Mammary epithelial cell (primary cell): ENCODE measurements at regions of chr11 and their contacts with region 1.

Region 1: DNA sequence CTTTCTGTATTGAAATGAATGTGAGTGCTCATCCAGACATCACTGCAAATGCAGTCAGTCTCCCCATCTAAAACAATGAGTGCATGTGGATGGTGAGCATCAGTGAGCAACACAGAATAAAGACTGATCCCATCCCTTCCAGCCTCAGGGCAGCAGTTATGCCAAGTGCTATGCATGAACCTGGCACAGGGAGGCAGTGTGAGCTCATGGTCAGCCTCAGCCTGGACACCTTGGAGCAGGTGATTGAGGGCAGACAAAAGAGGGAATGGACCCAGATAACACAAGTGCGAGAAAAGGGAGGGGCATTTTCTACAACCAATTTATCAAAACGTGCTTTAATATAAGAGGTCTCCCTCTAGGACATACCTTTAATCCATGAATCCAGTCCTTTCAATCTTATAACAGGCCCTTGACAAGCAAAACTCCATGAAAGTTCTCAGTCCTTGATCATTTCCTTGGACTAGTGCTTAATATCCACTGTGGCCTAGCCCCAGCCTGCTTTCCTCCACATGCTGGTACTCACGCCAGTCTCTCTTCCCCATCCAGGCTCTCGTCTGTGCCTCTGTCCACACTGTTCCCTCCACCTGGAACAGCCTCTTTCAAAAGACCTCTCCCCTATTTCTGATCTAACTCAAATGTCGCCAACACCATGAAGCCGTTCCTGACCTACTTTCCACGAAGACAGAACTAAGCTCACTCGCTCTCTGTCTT is 50.5 kb upstream of the LRRC55 start:
- DNase-seq: peak; percentile 39
- H3K4me3 ChIP-seq: no peak overlapping the region
- H3K27ac ChIP-seq: no peak overlapping the region
- H3K4me1 ChIP-seq: no peaks in the 10 kb centered on the region
- H3K27me3 ChIP-seq: no peaks in the 10 kb centered on the region
- CTCF ChIP-seq: peak; percentile 78 to 93

Region 2: DNA sequence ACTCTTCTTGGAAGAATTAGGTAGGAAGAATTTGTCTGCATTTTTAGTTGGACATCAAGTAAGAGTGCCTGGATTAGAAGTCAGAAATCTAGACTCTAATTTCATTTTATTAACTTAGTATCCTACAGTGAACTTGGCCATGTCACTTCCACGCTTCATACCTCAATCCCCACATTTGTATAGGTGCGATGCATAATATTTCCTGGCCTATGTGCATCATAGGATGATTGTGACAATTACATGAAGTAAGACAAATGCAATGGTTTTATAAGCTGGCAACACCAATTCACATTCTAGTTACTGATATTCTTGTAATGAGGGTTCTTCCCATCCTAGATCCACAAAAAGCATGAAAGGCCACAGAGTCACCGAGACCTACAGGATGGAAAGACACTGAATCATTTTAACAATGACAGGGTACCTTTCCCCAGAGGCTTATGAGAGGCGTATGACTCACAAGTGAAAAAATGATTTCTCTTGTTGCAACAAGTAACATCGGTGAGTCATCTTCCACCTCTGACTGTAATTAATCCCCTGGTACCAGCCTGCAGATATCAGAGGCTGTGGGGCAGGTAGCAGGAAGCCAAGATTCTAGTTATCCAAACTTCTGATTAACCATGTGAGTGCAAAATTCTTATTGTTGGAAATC is 198.5 kb before region 1 on chr11:
- CTCF ChIA-PET with region 1: no interaction called
- dilution Hi-C with region 1: no loop called
- in situ Hi-C with region 1: no loop called
- intact Hi-C with region 1: no loop called
- DNase-seq: peak; percentile 97
- H3K4me3 ChIP-seq: no peak overlapping the region
- H3K27ac ChIP-seq: peak overlapping the region; percentile 48
- H3K4me1 ChIP-seq: peaks cover 15% of the 10 kb centered on the region
- H3K27me3 ChIP-seq: no peaks in the 10 kb centered on the region
- CTCF ChIP-seq: no peak

Region 3: GRCh38 chr11:57055764-57056163 is 75.5 kb before region 1 on chr11:
- CTCF ChIA-PET with region 1: no interaction called
- dilution Hi-C with region 1: no loop called
- in situ Hi-C with region 1: no loop called
- intact Hi-C with region 1: no loop called
- DNase-seq: no peak
- H3K4me3 ChIP-seq: no peak overlapping the region
- H3K27ac ChIP-seq: no peak overlapping the region
- H3K4me1 ChIP-seq: no peaks in the 10 kb centered on the region
- H3K27me3 ChIP-seq: no peaks in the 10 kb centered on the region
- CTCF ChIP-seq: no peak

Region 4: DNA sequence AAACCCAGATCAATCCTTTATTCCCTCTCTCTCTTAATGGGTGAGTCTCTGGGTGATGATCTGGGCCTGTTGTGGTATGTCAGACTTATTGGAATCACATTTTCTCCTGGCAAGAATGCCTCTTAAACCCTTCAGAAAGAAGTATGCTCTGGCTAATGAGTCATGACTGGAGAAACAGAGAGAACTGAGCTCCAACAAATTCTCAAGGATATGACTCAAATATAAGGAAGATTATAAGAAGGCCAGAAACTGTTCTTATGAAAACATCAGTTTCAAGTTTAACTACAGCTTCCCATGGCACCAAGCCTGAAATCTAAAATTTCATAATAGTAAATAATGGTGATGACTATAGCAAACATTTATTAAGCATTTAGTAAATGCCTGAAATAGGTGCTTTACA is 58.6 kb before region 1 on chr11:
- CTCF ChIA-PET with region 1: no interaction called
- dilution Hi-C with region 1: no loop called
- in situ Hi-C with region 1: no loop called
- intact Hi-C with region 1: no loop called
- DNase-seq: peak; percentile 97
- H3K4me3 ChIP-seq: no peak overlapping the region
- H3K27ac ChIP-seq: peak overlapping the region; percentile 59
- H3K4me1 ChIP-seq: peaks cover 23% of the 10 kb centered on the region
- H3K27me3 ChIP-seq: no peaks in the 10 kb centered on the region
- CTCF ChIP-seq: no peak

Region 5: GRCh38 chr11:57230791-57231538 is 99.7 kb after region 1 on chr11:
- CTCF ChIA-PET with region 1: no interaction called
- dilution Hi-C with region 1: loop called (anchors 5 kb)
- in situ Hi-C with region 1: no loop called
- intact Hi-C with region 1: no loop called
- DNase-seq: no peak
- H3K4me3 ChIP-seq: no peak overlapping the region
- H3K27ac ChIP-seq: no peak overlapping the region
- H3K4me1 ChIP-seq: no peaks in the 10 kb centered on the region
- H3K27me3 ChIP-seq: peaks cover 1% of the 10 kb centered on the region
- CTCF ChIP-seq: no peak

Region 6: DNA sequence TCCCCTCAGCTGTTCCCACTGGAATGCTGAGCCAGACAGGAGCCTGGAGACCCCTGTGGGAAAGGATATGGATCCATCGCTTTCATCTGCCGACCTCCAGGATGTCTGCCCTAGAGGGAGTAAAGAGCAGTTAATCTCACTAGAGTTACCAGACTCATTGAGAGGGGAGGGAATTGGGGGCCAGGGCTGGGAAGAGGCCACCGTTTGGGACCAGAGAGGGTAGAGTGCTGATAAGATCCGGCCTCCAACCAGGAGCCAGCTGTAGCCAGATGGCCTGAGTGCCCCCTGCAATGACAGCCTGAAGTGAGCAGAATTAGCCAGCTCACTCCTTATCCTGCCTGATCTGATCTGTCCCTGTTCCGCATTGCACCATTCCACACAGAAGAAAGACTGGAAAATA is 109.5 kb after region 1 on chr11:
- CTCF ChIA-PET with region 1: no interaction called
- dilution Hi-C with region 1: no loop called
- in situ Hi-C with region 1: loop called (anchors 5 kb)
- intact Hi-C with region 1: no loop called
- DNase-seq: no peak
- H3K4me3 ChIP-seq: no peak overlapping the region
- H3K27ac ChIP-seq: no peak overlapping the region
- H3K4me1 ChIP-seq: no peaks in the 10 kb centered on the region
- H3K27me3 ChIP-seq: no peaks in the 10 kb centered on the region
- CTCF ChIP-seq: no peak

Region 7: DNA sequence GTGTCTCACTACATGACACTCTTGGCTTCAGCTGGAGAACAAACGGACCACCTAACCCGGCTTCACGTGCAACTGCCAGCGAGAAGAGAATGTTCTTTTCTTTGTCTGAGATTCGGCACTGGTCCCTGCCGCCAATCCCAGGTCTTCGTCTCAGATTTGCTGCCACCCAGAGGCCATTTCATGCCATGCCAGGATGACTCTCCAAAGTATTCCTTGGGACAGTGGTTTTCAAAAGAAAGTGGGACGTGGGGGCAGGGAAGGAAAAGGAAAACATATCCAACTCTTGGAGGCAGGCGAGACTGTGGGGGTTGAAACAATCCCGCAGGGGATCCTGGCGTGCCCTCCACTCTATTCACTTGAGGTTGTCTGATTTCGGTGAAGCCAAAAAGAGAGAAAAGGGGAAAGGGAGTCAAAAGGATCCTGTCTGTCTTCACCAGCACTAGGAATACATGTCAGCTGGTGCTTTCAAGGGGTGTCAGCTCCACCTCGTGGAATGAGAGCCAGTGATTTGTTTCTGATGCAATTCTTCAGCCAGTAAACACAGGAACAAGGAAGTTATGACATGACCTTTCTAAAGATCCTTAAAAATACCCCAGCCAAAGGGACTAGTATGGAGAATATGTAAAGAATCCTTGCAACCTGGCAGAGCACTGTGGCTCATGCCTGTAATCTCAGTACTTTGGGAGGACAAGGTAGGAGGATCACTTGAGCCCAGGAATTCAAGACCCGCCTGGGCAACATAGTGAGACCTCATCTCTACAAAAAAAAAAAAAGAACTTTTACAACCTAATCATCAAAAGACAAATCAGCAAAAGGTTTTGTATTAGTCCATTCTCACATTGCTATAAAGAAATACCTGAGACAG is 146.8 kb after region 1 on chr11:
- CTCF ChIA-PET with region 1: no interaction called
- dilution Hi-C with region 1: loop called (anchors 5 kb)
- in situ Hi-C with region 1: loop called in 1 of 2 experiments (anchors 10 kb)
- intact Hi-C with region 1: loop called (anchors 1 kb)
- DNase-seq: peak; percentile 64
- H3K4me3 ChIP-seq: no peak overlapping the region
- H3K27ac ChIP-seq: peak overlapping the region; percentile 62
- H3K4me1 ChIP-seq: peaks cover 36% of the 10 kb centered on the region
- H3K27me3 ChIP-seq: no peaks in the 10 kb centered on the region
- CTCF ChIP-seq: peak; percentile 82 to 93

Region 8: DNA sequence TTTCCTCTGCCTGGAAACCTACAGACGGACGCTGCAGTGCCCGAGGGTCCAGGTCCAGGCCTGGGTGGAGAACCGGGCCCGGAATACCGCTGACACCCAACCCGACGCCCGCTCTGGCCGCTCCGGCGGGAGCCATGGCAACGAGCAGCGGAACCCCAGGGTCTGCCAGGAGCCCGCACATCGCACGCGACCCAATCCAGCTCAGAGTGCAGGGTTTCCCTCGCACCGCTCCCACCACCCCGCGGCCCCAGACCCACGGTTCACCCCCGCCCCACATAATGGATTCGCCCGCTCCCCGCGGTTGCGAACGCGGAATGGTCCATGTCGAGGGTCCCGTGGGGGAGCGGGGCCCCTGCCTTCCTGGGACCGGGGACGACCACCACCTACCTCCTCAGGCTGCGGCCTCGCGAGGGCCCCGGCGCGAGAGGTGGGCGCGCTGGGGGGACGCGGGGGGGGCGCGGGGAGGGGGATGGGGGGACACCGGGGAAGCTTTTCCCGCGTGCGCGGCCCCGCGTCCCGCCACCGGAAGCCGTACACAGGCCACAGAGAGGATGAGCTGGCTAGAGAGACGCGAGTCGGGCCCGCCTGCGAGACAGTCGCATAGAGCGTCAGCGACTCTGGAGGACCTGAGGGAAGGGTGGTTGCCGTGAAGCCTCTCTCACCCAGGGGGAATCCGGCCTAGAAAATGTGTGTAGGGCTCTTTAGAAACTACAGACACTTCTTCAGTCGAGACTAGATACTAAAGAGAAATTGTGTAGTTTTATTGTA is 204.3 kb after region 1 on chr11 and contains the start of gene SSRP1:
- CTCF ChIA-PET with region 1: interaction called, 7 read pairs
- dilution Hi-C with region 1: no loop called
- in situ Hi-C with region 1: no loop called
- intact Hi-C with region 1: loop called (anchors 1 kb)
- DNase-seq: peak; percentile 78
- H3K4me3 ChIP-seq: peak within 1 kb of the TSS; percentile 56 to 91 (median 82)
- H3K27ac ChIP-seq: peak within 1 kb of the TSS; percentile 73
- H3K4me1 ChIP-seq: peaks cover 15% of the 10 kb centered on the region
- H3K27me3 ChIP-seq: no peaks in the 10 kb centered on the region
- CTCF ChIP-seq: no peak
- total RNA-seq, gene SSRP1: 53.0 to 127 TPM